Transverse colon (tissue), 4 donors: ENCODE measurements at regions of chr5 and their contacts with region 1.

Region 1: GRCh38 chr5:163614787-163615186 is 109.4 kb downstream of the MAT2B start:
- DNase-seq: no peak
- H3K4me3 ChIP-seq: no peak overlapping the region
- H3K27ac ChIP-seq: no peak overlapping the region
- H3K4me1 ChIP-seq: no peaks in the 10 kb centered on the region
- H3K27me3 ChIP-seq: no peaks in the 10 kb centered on the region
- CTCF ChIP-seq: no peak
- EP300 ChIP-seq: no peak
- POLR2A ChIP-seq: no peak

Region 2: DNA sequence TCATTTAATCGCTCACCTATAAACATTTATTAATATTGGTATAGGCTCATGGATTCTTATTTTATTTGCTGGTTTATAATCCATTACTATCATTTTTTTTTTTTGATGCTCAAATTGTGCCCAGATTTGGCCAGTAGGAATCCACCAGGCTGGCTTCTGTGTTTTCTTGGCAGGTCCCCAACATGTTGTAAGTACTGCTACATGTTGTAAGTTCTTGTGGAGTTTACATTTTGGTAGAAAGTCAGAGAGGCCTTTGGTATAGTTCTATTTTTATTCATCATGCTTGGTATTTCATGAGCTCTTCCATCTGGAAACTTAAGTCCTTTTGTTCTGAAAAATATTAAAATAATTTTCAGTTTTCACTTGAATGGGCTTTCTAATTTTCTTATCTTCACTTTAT is 62.3 kb before region 1 on chr5:
- in situ Hi-C with region 1: no loop called
- intact Hi-C with region 1: loop called (anchors 2 kb)
- DNase-seq: no peak
- H3K4me3 ChIP-seq: no peak overlapping the region
- H3K27ac ChIP-seq: no peak overlapping the region
- H3K4me1 ChIP-seq: no peaks in the 10 kb centered on the region
- H3K27me3 ChIP-seq: no peaks in the 10 kb centered on the region
- CTCF ChIP-seq: no peak
- EP300 ChIP-seq: no peak
- POLR2A ChIP-seq: no peak

Region 3: DNA sequence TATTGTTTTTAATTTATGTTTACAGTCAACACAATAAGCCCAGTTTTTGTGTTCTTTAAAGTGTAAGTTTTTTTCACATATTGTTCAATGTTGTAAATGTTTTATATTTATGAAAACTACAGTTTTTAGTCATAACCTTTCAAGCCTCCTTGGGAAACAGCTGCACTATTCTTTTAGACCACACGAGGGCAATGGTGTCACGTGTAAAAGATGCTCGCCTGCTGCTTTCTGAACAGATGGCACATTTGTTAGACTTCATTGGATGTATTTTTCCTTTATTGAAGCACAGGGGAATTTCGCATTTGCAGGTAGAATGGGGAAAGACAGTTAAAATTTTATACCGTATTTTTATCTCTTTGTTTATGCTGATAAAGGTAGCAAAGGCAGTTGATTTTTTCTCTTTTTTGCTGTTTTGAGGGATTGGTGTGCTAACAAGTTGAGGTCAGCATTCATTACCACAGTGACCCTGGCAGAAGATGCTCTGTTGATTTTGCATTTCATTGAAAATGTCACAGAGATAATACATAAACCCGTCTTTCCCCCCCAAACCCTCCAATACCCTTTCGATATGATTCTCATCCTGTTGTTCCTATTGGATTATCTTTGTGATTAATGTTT is 50.4 kb before region 1 on chr5:
- in situ Hi-C with region 1: no loop called
- intact Hi-C with region 1: no loop called
- DNase-seq: peak; percentile 62
- H3K4me3 ChIP-seq: no peak overlapping the region
- H3K27ac ChIP-seq: no peak overlapping the region
- H3K4me1 ChIP-seq: peaks cover 0 to 21% (median 12%) of the 10 kb centered on the region in 4 donors
- H3K27me3 ChIP-seq: peaks cover 53% of the 10 kb centered on the region
- CTCF ChIP-seq: peak; percentile 82 to 92 (median 88)
- EP300 ChIP-seq: no peak
- POLR2A ChIP-seq: no peak

Region 4: GRCh38 chr5:164115420-164115819 is 500.6 kb after region 1 on chr5:
- in situ Hi-C with region 1: no loop called
- intact Hi-C with region 1: no loop called
- DNase-seq: no peak
- H3K4me3 ChIP-seq: no peak overlapping the region
- H3K27ac ChIP-seq: no peak overlapping the region
- H3K4me1 ChIP-seq: no peaks in the 10 kb centered on the region
- H3K27me3 ChIP-seq: no peaks in the 10 kb centered on the region
- CTCF ChIP-seq: no peak
- EP300 ChIP-seq: no peak
- POLR2A ChIP-seq: no peak